ENCODE measurements at regions of chr3 and their contacts with region 1.

Region 1: DNA sequence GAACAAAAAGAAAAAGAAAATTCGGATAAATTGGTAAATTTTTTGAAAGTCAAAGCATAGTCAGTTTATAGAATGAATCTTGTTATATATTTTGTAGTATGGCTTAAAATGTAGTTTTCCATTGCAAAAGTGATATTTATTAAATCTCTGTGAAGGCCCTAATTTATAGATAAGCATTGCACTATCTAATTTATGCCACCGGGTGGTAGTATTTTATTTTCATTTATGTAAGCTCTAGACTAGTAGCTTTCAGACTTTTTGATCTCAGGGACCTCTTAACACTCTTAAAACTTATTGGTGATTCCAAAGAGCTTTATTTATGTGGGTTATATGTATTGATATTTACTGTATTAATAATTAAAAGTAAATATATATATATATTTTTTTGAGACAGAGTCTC is 133.9 kb upstream of the LRRFIP2 start:
- DNase-seq: no peak
- ATAC-seq: peak; percentile 66
- H3K4me3 ChIP-seq: no peak overlapping the region
- H3K27ac ChIP-seq: no peak overlapping the region
- H3K4me1 ChIP-seq: no peaks in the 10 kb centered on the region
- H3K27me3 ChIP-seq: no peaks in the 10 kb centered on the region
- CTCF ChIP-seq: peak in 1 of 3 experiments; percentile 26; a peak in 2 of 6 replicates
- EP300 ChIP-seq: no peak
- POLR2A ChIP-seq: no peak
- RAD21 ChIP-seq: peak; percentile 26; the same call in 1 of the 2 replicates

Region 2: DNA sequence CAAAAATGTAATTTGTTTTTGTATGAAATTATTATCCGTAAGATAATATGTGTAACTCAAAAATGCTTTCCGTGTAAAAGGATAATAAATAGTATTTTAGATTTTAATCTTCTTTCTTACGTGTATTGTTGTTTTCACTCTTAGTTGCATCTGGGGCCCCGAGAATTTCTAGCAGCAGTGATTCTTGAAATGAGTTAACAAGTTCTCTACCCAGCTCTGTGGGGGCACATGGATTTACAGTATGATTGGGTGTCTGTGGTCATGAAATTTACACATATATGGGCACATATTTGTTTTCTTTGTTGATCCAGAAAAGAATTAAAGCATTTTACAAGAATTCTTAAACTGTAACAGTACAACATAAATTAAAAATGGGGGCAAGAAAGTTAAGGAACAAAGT is 12.0 kb after region 1 on chr3:
- CTCF ChIA-PET with region 1: interaction called, 12 read pairs
- POLR2A ChIA-PET with region 1: no interaction called
- RAD21 ChIA-PET with region 1: no interaction called
- SMC1A ChIA-PET with region 1: interaction called, 12 read pairs
- in situ Hi-C with region 1: no loop called
- intact Hi-C with region 1: no loop called
- DNase-seq: no peak
- ATAC-seq: peak; percentile 56
- H3K4me3 ChIP-seq: no peak overlapping the region
- H3K27ac ChIP-seq: peak overlapping the region; percentile 57; the same call in 1 of the 2 replicates
- H3K4me1 ChIP-seq: peaks cover 5% of the 10 kb centered on the region; the same call in 1 of the 2 replicates
- H3K27me3 ChIP-seq: no peaks in the 10 kb centered on the region
- CTCF ChIP-seq: no peak
- EP300 ChIP-seq: no peak
- POLR2A ChIP-seq: no peak
- RAD21 ChIP-seq: no peak

Region 3: GRCh38 chr3:37330466-37330865 is 22.2 kb after region 1 on chr3:
- CTCF ChIA-PET with region 1: interaction called, 11 read pairs
- POLR2A ChIA-PET with region 1: interaction called, 3 read pairs
- RAD21 ChIA-PET with region 1: interaction called, 3 read pairs
- SMC1A ChIA-PET with region 1: interaction called, 3 read pairs
- in situ Hi-C with region 1: no loop called
- intact Hi-C with region 1: no loop called
- DNase-seq: no peak
- ATAC-seq: no peak
- H3K4me3 ChIP-seq: no peak overlapping the region
- H3K27ac ChIP-seq: no peak overlapping the region
- H3K4me1 ChIP-seq: no peaks in the 10 kb centered on the region
- H3K27me3 ChIP-seq: no peaks in the 10 kb centered on the region
- CTCF ChIP-seq: no peak
- EP300 ChIP-seq: no peak
- POLR2A ChIP-seq: no peak
- RAD21 ChIP-seq: no peak

Region 4: DNA sequence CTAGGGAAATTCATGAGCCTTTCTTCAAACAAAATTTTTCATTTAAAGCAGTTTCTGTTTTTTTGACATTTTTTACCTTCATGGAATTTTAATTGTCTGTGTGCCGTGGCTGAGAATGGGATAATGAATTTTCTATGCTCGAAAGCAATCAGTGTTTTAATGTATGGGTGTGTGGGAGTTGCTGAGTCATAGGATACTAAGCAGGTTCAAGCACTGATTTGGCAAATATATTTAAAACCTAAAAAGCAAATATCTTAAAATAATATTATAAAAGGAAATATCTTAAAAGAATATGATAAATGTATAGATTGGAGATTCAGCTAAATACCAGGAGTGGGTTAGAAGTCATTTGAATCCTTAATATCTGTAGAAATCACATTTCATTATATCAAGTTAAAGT is 39.7 kb after region 1 on chr3:
- CTCF ChIA-PET with region 1: no interaction called
- POLR2A ChIA-PET with region 1: no interaction called
- RAD21 ChIA-PET with region 1: no interaction called
- SMC1A ChIA-PET with region 1: no interaction called
- in situ Hi-C with region 1: no loop called
- intact Hi-C with region 1: no loop called
- DNase-seq: no peak
- ATAC-seq: no peak
- H3K4me3 ChIP-seq: no peak overlapping the region
- H3K27ac ChIP-seq: no peak overlapping the region
- H3K4me1 ChIP-seq: no peaks in the 10 kb centered on the region
- H3K27me3 ChIP-seq: no peaks in the 10 kb centered on the region
- CTCF ChIP-seq: no peak
- EP300 ChIP-seq: no peak
- POLR2A ChIP-seq: no peak
- RAD21 ChIP-seq: no peak